ENCODE measurements at regions of chr6 and their contacts with region 1.

Region 1: GRCh38 chr6:27871924-27872638 is 40.1 kb downstream of the OR2B2 start:
- DNase-seq: peak; percentile 89
- CTCF ChIP-seq: peak; percentile 64

Region 2: DNA sequence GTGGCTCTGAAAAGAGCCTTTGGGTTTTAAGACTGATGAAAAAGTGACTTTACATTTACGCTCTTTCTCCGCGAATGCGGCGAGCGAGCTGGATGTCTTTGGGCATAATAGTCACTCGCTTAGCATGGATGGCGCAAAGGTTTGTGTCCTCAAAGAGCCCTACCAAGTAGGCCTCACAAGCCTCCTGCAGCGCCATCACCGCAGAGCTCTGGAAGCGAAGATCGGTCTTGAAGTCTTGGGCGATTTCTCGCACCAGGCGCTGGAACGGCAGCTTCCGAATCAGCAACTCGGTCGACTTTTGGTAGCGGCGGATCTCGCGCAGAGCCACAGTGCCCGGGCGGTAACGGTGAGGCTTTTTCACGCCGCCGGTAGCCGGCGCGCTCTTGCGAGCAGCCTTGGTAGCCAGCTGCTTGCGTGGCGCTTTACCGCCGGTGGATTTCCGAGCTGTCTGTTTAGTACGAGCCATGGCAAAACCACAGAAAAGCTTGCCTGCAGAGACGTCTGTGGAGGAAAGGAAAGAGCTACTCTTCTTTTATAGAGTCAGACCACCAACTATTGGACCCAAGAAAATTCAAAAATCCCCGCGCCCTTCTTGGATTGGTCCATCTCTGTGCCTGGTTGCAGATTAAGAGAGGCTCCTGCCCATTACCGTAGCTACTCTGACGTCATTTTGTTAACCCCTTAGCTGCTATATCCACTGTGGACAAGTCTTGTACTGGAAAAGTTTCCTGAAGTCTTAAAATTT is 1840.3 kb before region 1 on chr6:
- in situ Hi-C with region 1: loop called (anchors 10 kb)
- DNase-seq: peak; percentile 87
- CTCF ChIP-seq: peak; percentile 21

Region 3: DNA sequence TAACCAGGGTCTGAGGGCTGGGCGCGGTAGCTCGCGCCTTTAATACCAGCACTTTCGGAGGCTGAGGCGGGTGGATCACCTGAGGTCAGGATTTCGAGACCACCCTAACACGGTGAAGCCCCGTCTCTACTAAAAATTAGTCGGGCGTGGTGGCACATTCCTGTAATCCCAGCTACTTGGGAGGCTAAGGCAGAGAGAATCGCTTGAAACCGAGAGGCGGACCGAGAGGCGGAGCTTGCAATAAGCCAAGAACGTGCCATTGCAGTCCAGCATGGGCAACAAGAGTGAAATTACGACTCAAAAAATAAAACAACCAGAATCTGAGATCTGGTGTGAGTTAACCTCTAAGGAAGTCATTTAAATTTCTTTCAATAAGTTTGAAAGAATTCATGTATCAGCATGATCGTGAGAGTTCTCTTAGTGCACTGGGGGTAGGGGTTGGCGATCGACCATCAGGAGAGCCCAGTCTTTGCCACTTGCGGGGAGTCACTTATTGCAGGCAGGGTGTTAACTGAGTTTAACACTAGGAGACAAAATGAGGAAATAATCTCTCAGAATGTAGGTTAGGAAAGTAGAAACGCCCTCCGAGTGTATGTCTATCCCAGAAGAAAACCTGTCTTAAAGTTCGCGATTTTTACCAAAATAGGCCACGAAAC is 192.6 kb before region 1 on chr6:
- in situ Hi-C with region 1: no loop called
- DNase-seq: no peak
- CTCF ChIP-seq: no peak

Region 4: GRCh38 chr6:27838058-27838944 is 33.8 kb before region 1 on chr6:
- in situ Hi-C with region 1: loop called (anchors 5 kb)
- DNase-seq: peak; percentile 88
- CTCF ChIP-seq: no peak